ENCODE measurements at regions of chr17 and their contacts with region 1.

Region 1: DNA sequence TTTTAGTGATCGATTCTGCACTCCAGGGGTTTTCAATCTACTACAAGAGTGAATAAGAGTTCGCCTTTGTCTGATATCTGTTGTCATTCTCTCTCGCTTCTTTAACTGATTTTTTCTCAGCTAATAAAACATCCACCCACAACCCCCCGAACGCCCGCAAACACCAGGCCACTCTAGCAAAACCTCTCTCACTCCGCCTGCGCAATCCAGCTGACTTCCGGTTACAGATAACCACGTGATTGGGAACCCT is 338 bp upstream of the RPL19 start:
- DNase-seq: peak; percentile 57
- H3K4me3 ChIP-seq: peak overlapping the region; percentile 64
- H3K27me3 ChIP-seq: no peaks in the 10 kb centered on the region
- CTCF ChIP-seq: no peak

Region 2: GRCh38 chr17:38687286-38687685 is 512.5 kb before region 1 on chr17:
- CTCF ChIA-PET with region 1: no interaction called
- POLR2A ChIA-PET with region 1: interaction called, 15 read pairs
- DNase-seq: no peak
- H3K4me3 ChIP-seq: no peak overlapping the region
- H3K27me3 ChIP-seq: peaks cover 3% of the 10 kb centered on the region; the same call in 1 of the 2 replicates
- CTCF ChIP-seq: no peak

Region 3: GRCh38 chr17:39235555-39236449 is 36.1 kb after region 1 on chr17:
- CTCF ChIA-PET with region 1: interaction called, 438 read pairs
- POLR2A ChIA-PET with region 1: interaction called, 3 read pairs
- DNase-seq: no peak
- H3K4me3 ChIP-seq: no peak overlapping the region
- H3K27me3 ChIP-seq: peaks cover 2% of the 10 kb centered on the region; the same call in 1 of the 2 replicates
- CTCF ChIP-seq: peak; percentile 71

Region 4: GRCh38 chr17:39244600-39245570 is 45.1 kb after region 1 on chr17:
- CTCF ChIA-PET with region 1: interaction called, 438 read pairs
- POLR2A ChIA-PET with region 1: no interaction called
- DNase-seq: no peak
- H3K4me3 ChIP-seq: no peak overlapping the region
- H3K27me3 ChIP-seq: no peaks in the 10 kb centered on the region
- CTCF ChIP-seq: peak; percentile 97

Measured in BJ (cell line).